ENCODE measurements at regions of chr13 and their contacts with region 1.

Region 1: DNA sequence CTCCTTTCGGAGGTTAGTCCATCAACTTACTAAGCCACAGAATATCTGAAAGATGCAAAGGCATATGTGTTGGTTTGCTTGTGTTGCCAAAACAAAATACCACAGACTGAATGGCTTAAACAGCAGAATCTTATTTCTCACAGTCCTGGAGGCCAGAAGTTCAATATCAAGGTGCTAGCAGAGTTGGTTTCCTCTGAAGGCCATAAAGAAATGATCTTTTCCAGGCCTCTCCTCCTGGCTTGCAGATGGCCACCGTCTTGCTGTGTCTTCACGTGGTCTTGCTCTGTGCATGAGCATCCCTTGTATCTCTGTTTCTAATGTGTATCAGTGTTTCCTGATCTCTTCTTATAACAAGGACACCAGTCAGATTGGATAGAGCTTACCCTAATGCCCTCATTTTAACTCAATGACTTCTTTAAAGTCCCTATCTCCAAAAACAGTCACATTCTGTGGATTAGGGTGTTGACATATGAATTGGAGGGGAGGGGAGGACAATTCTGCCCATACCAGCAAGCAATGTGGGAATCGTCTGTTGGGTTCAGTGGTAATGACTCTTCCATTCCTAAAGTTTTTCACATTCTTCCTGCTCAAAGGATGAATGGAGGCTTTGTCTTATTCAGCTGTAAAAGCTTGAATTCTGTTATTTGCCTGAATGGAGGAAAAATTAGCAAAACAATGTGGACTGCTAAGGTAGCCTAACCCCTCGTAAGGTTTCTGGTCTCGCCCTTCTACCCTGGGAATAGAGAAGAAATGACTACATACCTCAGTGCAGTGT is 715.7 kb downstream of the DIAPH3 start:
- DNase-seq: peak; percentile 75
- ATAC-seq: peak; percentile 86
- H3K4me3 ChIP-seq: no peak overlapping the region
- H3K27ac ChIP-seq: peak overlapping the region; percentile 69; the same call in 1 of the 2 replicates
- H3K4me1 ChIP-seq: peaks cover 3% of the 10 kb centered on the region; the same call in 1 of the 2 replicates
- H3K27me3 ChIP-seq: no peaks in the 10 kb centered on the region
- CTCF ChIP-seq: no peak
- POLR2A ChIP-seq: no peak
- RAD21 ChIP-seq: no peak

Region 2: GRCh38 chr13:59504407-59504806 is 56.4 kb after region 1 on chr13:
- CTCF ChIA-PET with region 1: no interaction called
- POLR2A ChIA-PET with region 1: no interaction called
- dilution Hi-C with region 1: no loop called
- in situ Hi-C with region 1: loop called (anchors 10 kb)
- intact Hi-C with region 1: no loop called
- DNase-seq: no peak
- ATAC-seq: no peak
- H3K4me3 ChIP-seq: no peak overlapping the region
- H3K27ac ChIP-seq: no peak overlapping the region
- H3K4me1 ChIP-seq: no peaks in the 10 kb centered on the region
- H3K27me3 ChIP-seq: peaks cover 9% of the 10 kb centered on the region
- CTCF ChIP-seq: no peak
- POLR2A ChIP-seq: no peak
- RAD21 ChIP-seq: no peak